ENCODE measurements at regions of chr14 and their contacts with region 1.

Region 1: GRCh38 chr14:102046343-102047278 is 40.2 kb downstream of the HSP90AA1 start:
- DNase-seq: peak; percentile 83 to 88
- H3K4me3 ChIP-seq: no peak overlapping the region
- H3K4me3 Mint-ChIP-seq: no peak overlapping the region
- H3K27ac Mint-ChIP-seq: no peak overlapping the region
- H3K4me1 ChIP-seq: no peaks in the 10 kb centered on the region
- H3K4me1 Mint-ChIP-seq: no peaks in the 10 kb centered on the region
- H3K27me3 ChIP-seq: no peaks in the 10 kb centered on the region
- H3K27me3 Mint-ChIP-seq: no peaks in the 10 kb centered on the region
- CTCF ChIP-seq: peak; percentile 52 to 81

Region 2: GRCh38 chr14:101964297-101965144 is 82.1 kb before region 1 on chr14 and contains the start of gene DYNC1H1:
- CTCF ChIA-PET with region 1: interaction called, 4 read pairs
- POLR2A ChIA-PET with region 1: no interaction called
- intact Hi-C with region 1: loop called (anchors 10 kb)
- DNase-seq: peak; percentile 84 to 93
- H3K4me3 ChIP-seq: peak within 1 kb of the TSS; percentile 84
- H3K4me3 Mint-ChIP-seq: peak within 1 kb of the TSS; percentile 79
- H3K27ac Mint-ChIP-seq: peak within 1 kb of the TSS; percentile 42
- H3K4me1 ChIP-seq: peaks cover 21% of the 10 kb centered on the region
- H3K4me1 Mint-ChIP-seq: peaks cover 12% of the 10 kb centered on the region
- H3K27me3 ChIP-seq: no peaks in the 10 kb centered on the region
- H3K27me3 Mint-ChIP-seq: no peaks in the 10 kb centered on the region
- CTCF ChIP-seq: no peak
- total RNA-seq, gene DYNC1H1: 349 and 351 TPM in 2 replicates

Region 3: GRCh38 chr14:102063091-102063802 is 16.6 kb after region 1 on chr14:
- CTCF ChIA-PET with region 1: interaction called, 13 read pairs
- POLR2A ChIA-PET with region 1: interaction called, 8 read pairs
- intact Hi-C with region 1: loop called (anchors 1 kb)
- DNase-seq: peak; percentile 87 to 89
- H3K4me3 ChIP-seq: 0 out of 2 replicates have a peak overlapping the region, but pooled peaks have one; percentile 13
- H3K4me3 Mint-ChIP-seq: peak overlapping the region; percentile 63
- H3K27ac Mint-ChIP-seq: peak overlapping the region; percentile 85
- H3K4me1 ChIP-seq: peaks cover 10% of the 10 kb centered on the region
- H3K4me1 Mint-ChIP-seq: peaks cover 7% of the 10 kb centered on the region
- H3K27me3 ChIP-seq: no peaks in the 10 kb centered on the region
- H3K27me3 Mint-ChIP-seq: no peaks in the 10 kb centered on the region
- CTCF ChIP-seq: peak; percentile 34 to 45

Region 4: GRCh38 chr14:102086972-102087761 is 40.6 kb after region 1 on chr14 and contains the start of gene HSP90AA1:
- CTCF ChIA-PET with region 1: interaction called, 11 read pairs
- POLR2A ChIA-PET with region 1: interaction called, 13 read pairs
- intact Hi-C with region 1: no loop called
- DNase-seq: peak; percentile 90 to 96
- H3K4me3 ChIP-seq: peak within 1 kb of the TSS; percentile 87
- H3K4me3 Mint-ChIP-seq: peak within 1 kb of the TSS; percentile 81
- H3K27ac Mint-ChIP-seq: peak within 1 kb of the TSS; percentile 71
- H3K4me1 ChIP-seq: peaks cover 29% of the 10 kb centered on the region
- H3K4me1 Mint-ChIP-seq: peaks cover 30% of the 10 kb centered on the region
- H3K27me3 ChIP-seq: no peaks in the 10 kb centered on the region
- H3K27me3 Mint-ChIP-seq: no peaks in the 10 kb centered on the region
- CTCF ChIP-seq: peak in 1 of 2 experiments; percentile 33
- total RNA-seq, gene HSP90AA1: 464 and 478 TPM in 2 replicates

Region 5: GRCh38 chr14:102209217-102209966 is 162.8 kb after region 1 on chr14:
- CTCF ChIA-PET with region 1: interaction called, 4 read pairs
- POLR2A ChIA-PET with region 1: no interaction called
- intact Hi-C with region 1: loop called (anchors 5 kb)
- DNase-seq: peak in 1 of 2 experiments; percentile 31
- H3K4me3 ChIP-seq: no peak overlapping the region
- H3K4me3 Mint-ChIP-seq: no peak overlapping the region
- H3K27ac Mint-ChIP-seq: peak overlapping the region; percentile 15
- H3K4me1 ChIP-seq: no peaks in the 10 kb centered on the region
- H3K4me1 Mint-ChIP-seq: no peaks in the 10 kb centered on the region
- H3K27me3 ChIP-seq: no peaks in the 10 kb centered on the region
- H3K27me3 Mint-ChIP-seq: no peaks in the 10 kb centered on the region
- CTCF ChIP-seq: peak in 1 of 2 experiments; percentile 30